ENCODE measurements at regions of chr9 and their contacts with region 1.

Region 1: DNA sequence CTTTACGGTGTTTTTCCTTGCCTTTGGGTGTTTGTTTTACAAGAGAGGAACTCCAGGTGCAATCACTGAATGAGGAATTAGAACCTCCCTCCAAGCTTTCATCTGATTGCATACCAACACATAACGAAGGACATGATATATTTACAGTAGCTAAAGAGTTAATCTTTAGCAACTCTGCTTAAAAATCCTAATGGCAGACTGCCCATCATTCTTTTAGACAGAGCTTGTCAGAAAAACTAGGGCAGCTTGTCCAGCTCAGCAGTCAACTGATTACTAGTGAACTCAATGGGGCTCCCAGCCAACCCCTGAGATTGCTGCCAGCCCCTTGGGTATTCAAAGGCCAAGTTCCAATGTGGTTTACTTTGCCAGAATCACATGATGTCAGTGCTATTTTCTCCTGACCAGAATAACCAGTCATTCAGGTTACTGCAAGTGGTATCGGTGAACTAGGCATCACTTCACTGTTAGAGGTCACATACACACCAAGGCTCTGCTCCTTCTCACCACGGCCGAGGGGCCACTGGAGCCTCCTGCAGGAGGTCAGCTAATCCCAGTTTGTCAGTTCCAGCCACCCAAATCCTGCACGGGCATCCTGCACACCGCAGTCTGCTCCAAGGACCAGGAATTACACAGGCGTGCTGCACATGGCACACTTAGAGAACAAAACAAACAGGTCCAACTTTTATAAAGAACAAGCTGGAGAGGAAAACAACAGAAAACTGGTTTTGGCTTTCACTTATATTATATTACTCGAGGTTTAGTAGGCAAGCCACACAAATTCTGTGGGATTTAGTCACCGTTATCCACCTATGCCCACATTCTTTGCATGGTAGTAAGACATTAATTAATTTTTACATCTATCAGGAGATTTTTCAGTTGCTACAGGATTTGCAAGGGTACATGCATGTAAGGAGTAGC is 62.5 kb downstream of the NFIB start:
- DNase-seq: peak; percentile 85

Region 2: GRCh38 chr9:14302405-14302804 is 51.0 kb after region 1 on chr9:
- intact Hi-C with region 1: loop called (anchors 5 kb)
- DNase-seq: no peak

Region 3: GRCh38 chr9:14366076-14366475 is 114.7 kb after region 1 on chr9:
- intact Hi-C with region 1: no loop called
- DNase-seq: no peak

Region 4: DNA sequence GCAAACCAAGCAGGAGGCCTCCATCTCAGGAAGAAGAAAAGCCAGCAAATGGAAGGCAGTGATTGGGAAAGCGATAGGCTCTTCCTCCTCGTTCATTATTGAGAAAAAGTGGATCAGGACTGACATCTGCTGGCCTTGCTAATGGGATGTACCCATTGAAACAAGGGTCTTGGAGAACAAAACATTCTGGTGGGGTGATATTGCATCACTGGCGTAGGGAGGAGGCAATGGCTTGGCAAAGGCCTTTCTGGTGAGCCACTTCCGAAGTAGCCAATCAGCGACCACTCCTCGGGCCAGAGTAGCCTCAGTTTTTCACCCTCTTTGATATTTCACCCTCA is 149.2 kb after region 1 on chr9:
- intact Hi-C with region 1: no loop called
- DNase-seq: no peak